ENCODE measurements at regions of chr17 and their contacts with region 1.

Region 1: DNA sequence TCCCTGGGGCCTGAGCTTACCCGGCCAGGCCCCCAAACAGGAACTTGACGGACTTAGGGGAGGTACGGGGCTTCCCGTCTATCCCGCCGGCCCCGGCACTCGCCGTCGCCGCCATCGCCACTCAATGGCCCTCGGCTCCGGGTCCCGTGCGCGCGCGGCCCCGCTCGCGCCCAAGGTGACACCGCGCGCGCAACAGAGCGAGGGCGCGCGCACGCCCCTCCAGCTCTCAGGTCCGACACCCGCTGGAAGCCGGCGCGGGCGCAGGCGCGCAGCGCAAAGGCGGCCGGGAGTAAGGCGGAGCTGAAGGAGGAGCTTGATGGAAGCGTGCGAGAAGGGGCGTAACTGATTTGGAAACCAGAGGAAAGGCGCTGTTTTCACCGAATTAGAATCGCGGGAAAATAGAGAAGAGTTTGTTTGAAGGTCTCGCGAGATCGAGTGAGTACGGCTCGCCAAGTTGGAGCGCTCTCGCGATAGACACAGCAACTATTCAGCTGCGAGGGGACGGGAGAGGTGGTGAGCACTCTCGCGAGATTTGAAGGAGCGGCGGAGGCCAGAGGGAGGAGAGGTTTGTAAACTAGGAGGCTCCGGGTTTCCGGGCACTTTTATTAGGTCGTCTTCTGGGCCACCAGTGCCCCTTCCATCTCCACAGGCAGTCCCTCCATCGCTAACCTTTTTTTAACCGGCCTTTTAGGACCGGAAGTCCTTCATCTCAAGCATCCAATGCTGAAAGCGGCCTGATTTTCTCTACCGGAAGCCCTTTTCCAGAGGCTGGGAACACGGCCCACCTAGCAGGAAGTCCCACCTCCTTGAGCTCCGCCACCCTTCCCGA is at the starts of genes RNF167 and SLC25A11:
- DNase-seq: peak; percentile 98
- ATAC-seq: peak; percentile 83
- H3K4me3 Mint-ChIP-seq: peak within 1 kb of the TSS; percentile 99
- H3K27ac Mint-ChIP-seq: peak within 1 kb of the TSS; percentile 97
- H3K4me1 Mint-ChIP-seq: peaks cover 54% of the 10 kb centered on the region
- H3K27me3 Mint-ChIP-seq: no peaks in the 10 kb centered on the region
- total RNA-seq, gene RNF167: 147 to 189 TPM
- total RNA-seq, gene SLC25A11: 74.2 to 77.9 TPM

Region 2: GRCh38 chr17:4263282-4264215 is 676.5 kb before region 1 on chr17 and contains the start of gene ANKFY1:
- CTCF ChIA-PET with region 1: no interaction called
- POLR2A ChIA-PET with region 1: no interaction called
- intact Hi-C with region 1: loop called in 1 of 2 experiments (anchors 5 kb)
- DNase-seq: peak; percentile 99
- ATAC-seq: peak; percentile 99
- H3K4me3 Mint-ChIP-seq: peak within 1 kb of the TSS; percentile 97
- H3K27ac Mint-ChIP-seq: peak within 1 kb of the TSS; percentile 96
- H3K4me1 Mint-ChIP-seq: peaks cover 35% of the 10 kb centered on the region
- H3K27me3 Mint-ChIP-seq: no peaks in the 10 kb centered on the region
- total RNA-seq, gene ANKFY1: 39.8 to 40.7 TPM

Region 3: DNA sequence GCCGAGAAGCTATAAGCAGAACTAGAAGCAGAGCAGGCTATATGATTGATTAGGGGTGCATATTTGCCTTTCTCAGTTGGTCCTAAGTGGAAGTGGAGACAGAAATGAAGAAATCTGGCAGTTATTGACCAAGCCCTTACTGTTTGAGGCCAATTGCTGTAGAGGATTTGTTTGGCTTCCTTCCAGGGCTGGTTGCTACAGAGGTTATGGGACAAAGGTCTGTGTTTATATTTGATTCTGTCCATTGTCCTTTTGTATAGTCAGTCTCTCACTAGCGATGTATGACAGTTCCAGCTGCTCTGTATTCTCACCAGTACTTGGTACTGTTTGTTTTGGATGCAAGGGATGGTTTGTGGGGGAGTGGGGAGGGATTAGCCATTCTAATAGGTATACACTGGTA is 291.3 kb before region 1 on chr17:
- CTCF ChIA-PET with region 1: no interaction called
- POLR2A ChIA-PET with region 1: no interaction called
- intact Hi-C with region 1: no loop called
- DNase-seq: no peak
- ATAC-seq: no peak
- H3K4me3 Mint-ChIP-seq: no peak overlapping the region
- H3K27ac Mint-ChIP-seq: no peak overlapping the region
- H3K4me1 Mint-ChIP-seq: no peaks in the 10 kb centered on the region
- H3K27me3 Mint-ChIP-seq: peaks cover 21% of the 10 kb centered on the region

Region 4: GRCh38 chr17:4709794-4710692 is 230.0 kb before region 1 on chr17 and contains the start of gene ARRB2:
- CTCF ChIA-PET with region 1: no interaction called
- POLR2A ChIA-PET with region 1: interaction called, 3 read pairs
- intact Hi-C with region 1: loop called in 1 of 2 experiments (anchors 1 kb)
- DNase-seq: peak; percentile 99
- ATAC-seq: peak; percentile 83
- H3K4me3 Mint-ChIP-seq: peak within 1 kb of the TSS; percentile 82
- H3K27ac Mint-ChIP-seq: peak within 1 kb of the TSS; percentile 90
- H3K4me1 Mint-ChIP-seq: peaks cover 52% of the 10 kb centered on the region
- H3K27me3 Mint-ChIP-seq: no peaks in the 10 kb centered on the region
- total RNA-seq, gene ARRB2: 168 to 175 TPM

Region 5: DNA sequence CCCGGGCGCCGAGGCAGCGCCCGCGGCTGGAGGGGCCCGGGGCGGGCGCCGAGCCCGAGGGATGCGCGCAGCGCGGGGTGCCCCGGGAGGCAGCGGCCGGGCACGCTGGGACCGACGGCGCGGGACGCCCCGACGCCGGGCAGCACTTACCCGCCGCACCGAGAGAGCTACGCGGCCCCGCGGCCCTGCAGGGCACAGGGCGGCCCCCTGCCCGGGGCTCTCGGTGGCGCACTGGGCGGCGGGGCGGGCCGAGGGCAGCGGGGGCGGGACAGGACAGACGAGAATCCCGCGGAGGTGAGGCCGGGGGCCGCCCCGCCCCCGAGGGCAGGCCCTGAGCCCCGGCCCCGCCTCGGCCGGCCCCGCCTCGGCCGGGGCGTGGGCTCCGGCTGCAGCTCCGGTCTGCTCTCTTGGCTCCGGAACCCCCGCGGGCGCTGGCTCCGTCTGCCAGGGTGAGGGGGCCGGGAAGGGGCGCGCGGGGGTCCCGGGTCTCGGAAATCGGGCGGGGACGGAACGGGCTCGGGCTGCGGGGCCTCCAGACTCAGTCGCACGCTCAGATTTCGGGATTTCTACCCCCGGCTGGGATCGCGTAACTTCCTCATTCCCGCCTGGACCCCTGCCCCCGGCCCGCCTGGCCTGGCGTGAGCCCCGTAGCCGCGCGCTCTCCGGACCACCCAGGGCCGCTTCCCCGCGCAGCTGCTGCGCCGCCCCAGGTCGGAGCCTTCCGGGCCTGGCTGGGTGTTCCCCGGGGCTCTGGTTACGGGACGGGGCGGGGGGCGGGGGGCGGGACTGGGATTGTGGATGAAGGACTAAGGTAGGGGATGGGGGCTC is 133.0 kb before region 1 on chr17 and contains the start of gene PLD2:
- CTCF ChIA-PET with region 1: no interaction called
- POLR2A ChIA-PET with region 1: no interaction called
- intact Hi-C with region 1: loop called in 1 of 2 experiments (anchors 1 kb)
- DNase-seq: peak; percentile 93
- ATAC-seq: peak; percentile 98
- H3K4me3 Mint-ChIP-seq: peak within 1 kb of the TSS; percentile 73
- H3K27ac Mint-ChIP-seq: no peak within 1 kb of the TSS
- H3K4me1 Mint-ChIP-seq: peaks cover 7% of the 10 kb centered on the region
- H3K27me3 Mint-ChIP-seq: no peaks in the 10 kb centered on the region
- total RNA-seq, gene PLD2: 12.3 to 14.1 TPM

Region 6: DNA sequence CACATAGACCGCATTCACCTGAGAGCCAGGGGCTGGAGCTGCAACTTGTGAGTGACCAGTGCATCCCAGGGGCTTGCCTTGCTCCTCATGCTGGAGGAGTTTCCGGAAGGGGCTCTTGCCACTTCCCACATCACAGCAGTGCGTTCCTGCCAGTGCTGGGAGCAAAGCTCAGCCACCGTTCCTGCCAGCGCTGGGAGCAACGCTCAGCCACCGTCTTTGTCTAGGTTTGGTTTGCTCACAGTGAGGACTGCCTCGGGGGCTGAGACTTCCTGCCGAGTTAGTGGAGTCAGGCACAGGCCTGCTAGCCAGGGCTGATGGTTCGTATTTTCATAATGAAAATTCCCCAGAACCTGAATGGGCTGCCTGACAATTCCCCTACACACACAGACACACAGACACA is 31.7 kb before region 1 on chr17:
- CTCF ChIA-PET with region 1: interaction called, 10 read pairs
- POLR2A ChIA-PET with region 1: interaction called, 4 read pairs
- intact Hi-C with region 1: loop called (anchors 1 to 5 kb)
- DNase-seq: peak; percentile 38
- ATAC-seq: peak; percentile 27
- H3K4me3 Mint-ChIP-seq: no peak overlapping the region
- H3K27ac Mint-ChIP-seq: no peak overlapping the region
- H3K4me1 Mint-ChIP-seq: peaks cover 4% of the 10 kb centered on the region
- H3K27me3 Mint-ChIP-seq: peaks cover 3% of the 10 kb centered on the region

Region 7: DNA sequence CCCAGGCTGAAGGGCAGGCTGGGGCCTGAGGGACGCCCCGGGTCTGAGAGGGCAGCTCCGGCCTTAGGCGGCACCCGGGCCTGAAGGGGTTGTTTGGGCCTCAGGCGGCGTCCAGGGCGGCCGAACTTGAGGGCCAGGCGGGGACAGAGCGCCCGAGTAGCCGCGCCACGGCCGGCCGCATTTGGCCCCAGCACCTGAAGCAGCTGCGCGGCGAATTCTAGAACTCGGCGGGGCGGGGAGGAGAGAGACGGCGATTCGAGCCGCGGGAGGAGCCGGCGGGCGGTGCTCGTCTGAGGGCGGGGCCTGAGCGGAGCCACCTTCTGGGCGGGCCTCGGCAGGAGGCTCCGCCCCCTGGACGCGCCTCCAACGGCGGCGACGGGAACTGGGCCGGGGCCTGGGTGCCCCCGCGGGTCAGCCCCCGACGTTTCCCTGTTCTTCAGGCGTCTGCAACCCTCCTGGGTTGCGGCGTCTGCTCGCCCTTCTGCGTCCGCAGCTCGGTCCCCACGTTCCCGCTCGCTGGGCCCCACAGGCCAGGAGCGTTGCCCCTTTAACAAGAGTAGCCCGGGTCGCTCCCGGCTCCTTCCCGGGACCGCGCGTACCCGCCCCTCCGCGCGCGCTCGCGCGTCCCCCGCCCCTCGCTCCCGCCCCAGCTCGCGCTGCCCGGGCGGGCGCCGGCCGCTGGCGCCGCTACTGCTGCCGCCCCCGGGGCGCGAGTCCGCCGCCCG is 57.5 kb after region 1 on chr17 and contains the starts of genes INCA1 and KIF1C:
- CTCF ChIA-PET with region 1: interaction called, 3 read pairs
- POLR2A ChIA-PET with region 1: interaction called, 9 read pairs
- intact Hi-C with region 1: loop called (anchors 1 to 5 kb)
- DNase-seq: peak; percentile 96
- ATAC-seq: peak; percentile 95
- H3K4me3 Mint-ChIP-seq: peak within 1 kb of the TSS; percentile 80
- H3K27ac Mint-ChIP-seq: peak within 1 kb of the TSS; percentile 55
- H3K4me1 Mint-ChIP-seq: peaks cover 20% of the 10 kb centered on the region
- H3K27me3 Mint-ChIP-seq: no peaks in the 10 kb centered on the region
- total RNA-seq, gene INCA1: 0.18 to 0.28 TPM
- total RNA-seq, gene KIF1C: 32.6 to 43.0 TPM

Measured in activated CD4-positive, alpha-beta T cell treated with anti-CD3 and anti-CD28 coated beads for 36 hours (primary cell).